A673 (cell line): ENCODE measurements at regions of chr1 and their contacts with region 1.

Region 1: GRCh38 chr1:13860031-13860430 is 160.0 kb downstream of the PRDM2 start:
- DNase-seq: no peak
- H3K4me3 ChIP-seq: no peak overlapping the region
- H3K27ac ChIP-seq: no peak overlapping the region
- H3K4me1 ChIP-seq: peaks cover 8% of the 10 kb centered on the region
- H3K27me3 ChIP-seq: no peaks in the 10 kb centered on the region
- CTCF ChIP-seq: no peak

Region 2: DNA sequence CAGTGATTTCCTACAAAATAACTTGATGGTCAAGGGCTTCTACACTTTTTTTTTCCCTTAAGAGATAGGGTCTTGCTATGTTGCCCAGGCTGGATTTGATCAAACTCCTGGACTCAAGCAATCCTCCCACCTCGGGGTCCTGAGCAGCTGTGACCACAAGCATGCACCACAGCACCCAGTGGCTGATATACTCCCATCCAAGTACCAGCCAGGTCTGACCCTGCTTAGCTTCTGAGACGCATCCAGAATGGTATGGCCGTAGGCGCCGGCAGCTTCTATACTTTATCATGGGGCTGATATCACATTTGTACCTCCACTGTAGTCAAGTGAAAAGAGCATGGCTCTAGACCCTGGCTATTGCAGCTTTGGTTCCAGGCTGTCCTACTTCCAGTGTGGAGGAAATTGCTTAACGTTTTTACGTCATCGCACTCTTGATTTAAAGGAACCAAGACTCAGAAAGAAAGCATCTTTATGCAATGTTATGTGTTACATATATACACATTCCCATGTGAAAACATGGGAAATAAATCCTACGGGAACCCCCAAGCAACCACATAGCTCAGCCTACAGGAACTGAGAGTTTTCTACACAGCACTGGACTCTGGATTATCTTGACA is 236.9 kb before region 1 on chr1:
- CTCF ChIA-PET with region 1: no interaction called
- POLR2A ChIA-PET with region 1: interaction called, 14 read pairs
- intact Hi-C with region 1: no loop called
- DNase-seq: no peak
- H3K4me3 ChIP-seq: no peak overlapping the region
- H3K27ac ChIP-seq: no peak overlapping the region
- H3K4me1 ChIP-seq: no peaks in the 10 kb centered on the region
- H3K27me3 ChIP-seq: no peaks in the 10 kb centered on the region
- CTCF ChIP-seq: no peak